Panc1 (cell line): ENCODE measurements at regions of chr12 and their contacts with region 1.

Region 1: GRCh38 chr12:88580051-88580871 is at the start of gene KITLG:
- DNase-seq: no peak
- ATAC-seq: peak; percentile 93
- H3K4me3 ChIP-seq: peak within 1 kb of the TSS; percentile 69 to 82
- H3K27ac ChIP-seq: peak within 1 kb of the TSS; percentile 29; the same call in 1 of the 2 replicates
- H3K4me1 ChIP-seq: peaks cover 12% of the 10 kb centered on the region
- H3K27me3 ChIP-seq: peaks cover 16% of the 10 kb centered on the region
- CTCF ChIP-seq: peak; percentile 41
- total RNA-seq, gene KITLG: 7.4 TPM

Region 2: DNA sequence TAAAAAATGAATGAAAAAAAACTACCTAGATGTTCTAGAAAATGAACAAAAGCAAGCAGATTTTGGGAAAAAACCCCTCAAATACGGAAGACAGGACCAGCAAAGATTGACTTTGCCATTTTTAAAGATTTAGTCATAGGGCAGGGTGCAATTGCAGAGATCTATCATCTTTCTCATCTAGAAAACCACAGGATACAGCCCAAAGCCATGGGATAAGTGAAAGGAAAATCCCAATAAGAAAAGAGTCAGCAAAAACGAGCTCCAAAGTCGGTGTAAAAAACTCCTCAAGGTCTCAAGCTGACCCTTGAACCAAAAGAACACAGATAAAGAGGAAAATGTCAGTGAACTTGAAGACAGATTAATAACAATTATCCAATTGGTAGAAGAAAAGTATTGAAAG is 466.4 kb before region 1 on chr12:
- CTCF ChIA-PET with region 1: no interaction called
- POLR2A ChIA-PET with region 1: interaction called, 14 read pairs
- in situ Hi-C with region 1: no loop called
- intact Hi-C with region 1: no loop called
- DNase-seq: no peak
- ATAC-seq: no peak
- H3K4me3 ChIP-seq: no peak overlapping the region
- H3K27ac ChIP-seq: no peak overlapping the region
- H3K4me1 ChIP-seq: peaks cover 2% of the 10 kb centered on the region; the same call in 1 of the 2 replicates
- H3K27me3 ChIP-seq: no peaks in the 10 kb centered on the region
- CTCF ChIP-seq: no peak

Region 3: DNA sequence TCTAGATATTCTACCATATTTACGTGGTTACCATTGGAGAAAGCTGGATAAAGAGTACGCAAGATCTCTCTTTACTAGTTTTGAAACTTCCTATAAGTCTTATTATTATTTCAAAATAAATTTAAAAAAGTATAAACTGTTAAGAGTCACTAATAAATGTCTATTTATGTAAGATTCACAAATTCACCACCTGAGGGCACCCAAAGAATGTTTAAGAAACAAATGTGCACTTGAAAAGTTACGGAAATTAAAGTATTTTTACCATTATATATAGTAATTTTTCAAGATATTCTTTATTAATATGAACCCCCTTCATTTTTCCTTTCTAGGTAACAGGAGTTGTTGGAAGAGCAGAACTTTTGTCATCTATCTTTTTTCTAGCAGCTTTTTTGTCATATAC is 426.3 kb before region 1 on chr12:
- CTCF ChIA-PET with region 1: no interaction called
- POLR2A ChIA-PET with region 1: no interaction called
- in situ Hi-C with region 1: no loop called
- intact Hi-C with region 1: loop called (anchors 10 kb)
- DNase-seq: no peak
- ATAC-seq: no peak
- H3K4me3 ChIP-seq: no peak overlapping the region
- H3K27ac ChIP-seq: no peak overlapping the region
- H3K4me1 ChIP-seq: no peaks in the 10 kb centered on the region
- H3K27me3 ChIP-seq: no peaks in the 10 kb centered on the region
- CTCF ChIP-seq: peak; percentile 17; the same call in 1 of the 2 replicates

Region 4: GRCh38 chr12:88529531-88530488 is 50.5 kb before region 1 on chr12:
- CTCF ChIA-PET with region 1: no interaction called
- POLR2A ChIA-PET with region 1: no interaction called
- in situ Hi-C with region 1: no loop called
- intact Hi-C with region 1: no loop called
- DNase-seq: no peak
- ATAC-seq: no peak
- H3K4me3 ChIP-seq: no peak overlapping the region
- H3K27ac ChIP-seq: no peak overlapping the region
- H3K4me1 ChIP-seq: no peaks in the 10 kb centered on the region
- H3K27me3 ChIP-seq: no peaks in the 10 kb centered on the region
- CTCF ChIP-seq: no peak

Region 5: DNA sequence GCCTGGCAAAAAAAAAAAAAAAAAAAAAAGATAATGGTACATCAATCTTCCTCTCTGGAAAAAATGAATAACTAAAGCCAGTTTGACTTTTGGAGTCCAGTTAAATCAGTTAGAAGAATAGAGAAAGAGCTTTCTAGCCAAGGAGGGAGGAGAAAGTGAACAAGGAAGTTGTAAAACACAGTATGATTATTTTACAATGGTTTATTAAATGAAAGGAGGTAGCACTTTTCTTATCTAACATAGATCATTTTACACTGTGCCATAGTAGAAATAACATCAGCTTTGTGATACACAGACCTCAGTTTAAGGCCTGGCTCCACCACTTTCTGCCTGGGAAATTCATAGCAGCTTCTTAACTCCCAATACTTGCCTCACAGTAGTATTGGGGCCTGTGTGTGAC is 15.4 kb after region 1 on chr12:
- CTCF ChIA-PET with region 1: no interaction called
- POLR2A ChIA-PET with region 1: interaction called, 15 read pairs
- in situ Hi-C with region 1: no loop called
- intact Hi-C with region 1: no loop called
- DNase-seq: no peak
- ATAC-seq: no peak
- H3K4me3 ChIP-seq: no peak overlapping the region
- H3K27ac ChIP-seq: no peak overlapping the region
- H3K4me1 ChIP-seq: no peaks in the 10 kb centered on the region
- H3K27me3 ChIP-seq: no peaks in the 10 kb centered on the region
- CTCF ChIP-seq: no peak

Region 6: DNA sequence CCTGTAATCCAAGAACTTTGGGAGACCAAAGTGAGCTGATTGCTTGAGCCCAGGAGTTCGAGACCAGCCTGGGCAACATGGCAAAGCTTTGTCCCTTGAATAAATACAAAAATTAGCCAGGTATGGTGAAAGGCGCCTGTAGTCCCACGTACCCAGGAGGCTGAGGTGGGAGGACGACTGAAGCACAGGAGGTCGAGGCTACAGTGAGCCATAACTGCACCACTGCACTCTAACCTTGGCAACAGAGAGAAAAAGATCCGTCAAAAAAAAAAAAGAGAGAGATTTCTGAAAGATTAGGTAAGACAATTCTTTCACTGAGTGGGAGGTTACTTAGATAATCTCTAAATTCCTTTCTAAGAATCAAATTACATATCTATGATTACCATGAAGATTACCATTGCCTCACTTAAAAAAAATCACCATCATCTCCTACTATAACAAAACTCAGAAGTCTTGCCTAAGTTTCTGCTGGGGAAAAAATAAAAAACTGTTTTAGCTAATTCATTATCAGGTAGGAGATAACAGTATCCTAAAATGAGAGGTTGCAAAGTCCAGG is 405.3 kb after region 1 on chr12:
- CTCF ChIA-PET with region 1: no interaction called
- POLR2A ChIA-PET with region 1: no interaction called
- in situ Hi-C with region 1: no loop called
- intact Hi-C with region 1: loop called (anchors 10 kb)
- DNase-seq: no peak
- ATAC-seq: no peak
- H3K4me3 ChIP-seq: no peak overlapping the region
- H3K27ac ChIP-seq: no peak overlapping the region
- H3K4me1 ChIP-seq: no peaks in the 10 kb centered on the region
- H3K27me3 ChIP-seq: no peaks in the 10 kb centered on the region
- CTCF ChIP-seq: no peak